ENCODE measurements at regions of chr12 and their contacts with region 1.

Region 1: DNA sequence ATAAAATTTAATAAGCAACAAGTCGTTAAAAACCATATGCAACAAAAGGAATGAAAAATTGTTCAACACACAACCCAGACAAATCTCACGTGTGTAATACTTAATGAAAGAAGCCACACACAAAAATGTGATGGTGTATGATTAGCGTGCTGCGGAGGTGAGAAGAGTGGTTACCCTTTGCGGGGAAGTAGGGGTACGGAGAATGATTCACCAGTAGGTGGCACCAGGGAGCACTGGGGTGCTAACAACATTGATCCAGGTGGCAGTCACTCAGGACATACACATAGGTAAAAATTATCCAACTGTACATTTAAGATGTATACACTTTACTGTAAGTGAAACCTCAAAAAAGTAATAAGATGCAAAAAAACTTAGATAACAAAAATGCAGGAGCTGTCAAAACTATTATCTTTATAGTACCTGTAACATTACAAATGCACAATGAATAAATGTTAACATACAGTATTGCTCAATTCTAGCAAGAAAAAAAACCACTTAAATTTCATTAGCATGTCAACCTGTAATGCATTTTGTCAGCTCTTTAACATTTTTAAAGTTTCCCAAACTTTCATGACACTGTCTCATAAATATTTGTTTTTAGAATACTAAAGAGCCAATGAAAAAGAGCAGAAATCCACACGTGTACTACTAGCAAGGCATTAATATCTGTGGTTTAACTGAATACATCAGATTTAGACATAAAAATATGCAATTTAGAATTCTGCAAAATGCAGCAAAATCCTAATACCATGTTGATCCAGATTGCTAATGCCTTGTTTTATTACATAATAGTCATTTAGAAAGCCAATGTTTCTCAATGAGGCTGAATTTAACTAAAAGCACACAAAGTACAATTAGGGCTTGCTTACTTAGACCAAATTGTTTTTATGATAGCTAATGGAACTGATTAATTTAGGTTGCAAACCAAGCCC is 46.7 kb downstream of the TMCC3 start:
- H3K4me3 Mint-ChIP-seq: no peak overlapping the region
- H3K27ac Mint-ChIP-seq: no peak overlapping the region
- H3K4me1 Mint-ChIP-seq: no peaks in the 10 kb centered on the region
- H3K27me3 Mint-ChIP-seq: peaks cover 6% of the 10 kb centered on the region

Region 2: DNA sequence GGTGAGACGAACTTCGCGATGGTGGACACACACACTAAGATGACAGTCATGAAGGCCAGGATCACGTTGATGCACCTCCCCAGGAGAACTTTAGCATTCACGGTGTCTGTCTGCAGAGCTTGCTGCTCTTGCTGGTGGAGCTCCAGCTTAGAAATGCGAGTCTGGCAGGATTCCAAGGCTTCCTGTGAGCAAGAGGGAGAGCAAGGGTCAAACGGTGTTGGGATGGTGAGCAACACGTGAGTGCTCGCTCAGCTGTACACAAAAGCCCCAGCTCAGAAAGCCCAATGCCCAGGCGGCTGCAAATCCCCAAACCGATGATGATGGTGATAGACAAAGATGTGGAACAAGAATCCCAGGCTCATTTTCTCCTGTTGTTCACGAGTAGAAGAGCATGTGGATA is 32.1 kb before region 1 on chr12:
- intact Hi-C with region 1: no loop called
- H3K4me3 Mint-ChIP-seq: no peak overlapping the region
- H3K27ac Mint-ChIP-seq: no peak overlapping the region
- H3K4me1 Mint-ChIP-seq: peaks cover 2% of the 10 kb centered on the region
- H3K27me3 Mint-ChIP-seq: peaks cover 3% of the 10 kb centered on the region

Region 3: GRCh38 chr12:94644141-94644979 is 40.7 kb after region 1 on chr12:
- intact Hi-C with region 1: loop called (anchors 5 kb)
- H3K4me3 Mint-ChIP-seq: peak overlapping the region; percentile 61
- H3K27ac Mint-ChIP-seq: peak overlapping the region; percentile 79
- H3K4me1 Mint-ChIP-seq: peaks cover 56% of the 10 kb centered on the region
- H3K27me3 Mint-ChIP-seq: peaks cover 32% of the 10 kb centered on the region

Region 4: GRCh38 chr12:94710933-94711332 is 107.2 kb after region 1 on chr12:
- intact Hi-C with region 1: no loop called
- H3K4me3 Mint-ChIP-seq: no peak overlapping the region
- H3K27ac Mint-ChIP-seq: no peak overlapping the region
- H3K4me1 Mint-ChIP-seq: no peaks in the 10 kb centered on the region
- H3K27me3 Mint-ChIP-seq: peaks cover 5% of the 10 kb centered on the region

Region 5: DNA sequence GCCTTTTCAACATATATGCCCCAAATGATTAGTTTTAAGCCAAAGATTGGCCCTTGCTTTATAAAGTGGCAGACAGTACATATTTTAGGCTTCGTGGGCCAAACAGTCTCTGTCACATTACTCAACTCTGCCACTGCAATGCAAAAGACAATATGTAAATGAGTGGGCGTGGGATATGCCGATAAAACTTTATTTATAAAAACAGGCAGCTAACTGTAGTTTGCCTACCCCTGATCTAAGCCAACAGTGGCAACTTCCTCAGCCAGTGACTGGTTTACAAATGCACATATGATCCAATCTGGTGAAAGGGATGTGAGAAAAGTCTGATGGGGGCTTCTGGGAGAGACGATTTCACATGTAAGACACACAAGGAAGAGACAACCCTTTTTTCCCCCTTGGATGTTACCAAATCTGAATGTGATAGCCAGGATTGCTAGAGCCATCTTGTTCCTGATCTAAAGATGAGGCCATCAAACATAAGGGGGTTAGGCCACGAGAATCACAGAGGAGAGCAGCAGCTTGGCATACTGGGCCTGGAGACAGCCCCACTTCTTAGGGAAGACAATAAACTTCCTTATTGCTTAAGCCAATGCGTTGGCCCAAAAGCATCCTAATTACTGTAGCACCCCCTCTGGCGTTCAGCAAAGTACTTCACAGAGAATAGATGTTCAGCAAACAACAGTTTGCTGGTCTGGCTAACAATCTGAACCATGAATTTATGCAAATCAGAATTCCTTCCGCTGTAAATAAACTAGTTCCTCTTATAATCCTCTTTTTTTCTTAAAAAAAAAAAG is 121.9 kb after region 1 on chr12:
- intact Hi-C with region 1: loop called (anchors 1 kb)
- H3K4me3 Mint-ChIP-seq: no peak overlapping the region
- H3K27ac Mint-ChIP-seq: no peak overlapping the region
- H3K4me1 Mint-ChIP-seq: peaks cover 14% of the 10 kb centered on the region
- H3K27me3 Mint-ChIP-seq: peaks cover 17% of the 10 kb centered on the region

Region 6: GRCh38 chr12:94762259-94762942 is 158.7 kb after region 1 on chr12:
- intact Hi-C with region 1: loop called (anchors 5 kb)
- H3K4me3 Mint-ChIP-seq: no peak overlapping the region
- H3K27ac Mint-ChIP-seq: no peak overlapping the region
- H3K4me1 Mint-ChIP-seq: peaks cover 7% of the 10 kb centered on the region
- H3K27me3 Mint-ChIP-seq: peaks cover 3% of the 10 kb centered on the region

Region 7: DNA sequence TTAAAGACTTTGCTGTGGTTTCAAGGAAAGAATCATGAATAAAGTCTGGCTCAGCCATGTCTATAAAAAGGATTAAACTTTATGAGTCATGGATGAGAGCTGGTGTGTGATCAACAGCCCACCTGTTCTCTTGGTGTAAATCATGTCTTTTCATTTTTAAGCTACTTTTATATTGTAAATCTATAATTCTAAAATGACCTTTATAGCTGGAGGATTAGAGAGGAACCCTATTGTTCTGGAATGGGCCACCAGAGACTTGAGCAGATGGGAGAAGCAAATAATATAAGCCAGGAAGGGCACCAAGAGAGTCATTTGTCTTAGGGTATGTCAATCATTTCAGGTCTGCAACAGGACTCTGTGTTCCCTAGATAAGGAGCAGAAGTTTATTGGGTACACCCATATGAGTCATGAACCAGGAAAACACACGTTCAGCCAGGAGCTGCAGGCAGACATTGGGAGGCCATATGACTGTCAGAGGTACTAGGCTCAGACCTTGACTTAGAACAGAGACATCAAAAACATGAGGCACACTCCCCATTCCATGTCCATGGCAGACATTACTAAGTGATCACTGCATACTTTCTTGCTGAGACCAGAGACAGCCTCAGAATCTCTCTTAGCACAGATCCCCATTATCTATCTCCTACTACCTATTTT is 350.5 kb after region 1 on chr12:
- intact Hi-C with region 1: no loop called
- H3K4me3 Mint-ChIP-seq: no peak overlapping the region
- H3K27ac Mint-ChIP-seq: no peak overlapping the region
- H3K4me1 Mint-ChIP-seq: peaks cover 12% of the 10 kb centered on the region
- H3K27me3 Mint-ChIP-seq: no peaks in the 10 kb centered on the region